PC-3 (cell line): ENCODE measurements at regions of chr7 and their contacts with region 1.

Region 1: DNA sequence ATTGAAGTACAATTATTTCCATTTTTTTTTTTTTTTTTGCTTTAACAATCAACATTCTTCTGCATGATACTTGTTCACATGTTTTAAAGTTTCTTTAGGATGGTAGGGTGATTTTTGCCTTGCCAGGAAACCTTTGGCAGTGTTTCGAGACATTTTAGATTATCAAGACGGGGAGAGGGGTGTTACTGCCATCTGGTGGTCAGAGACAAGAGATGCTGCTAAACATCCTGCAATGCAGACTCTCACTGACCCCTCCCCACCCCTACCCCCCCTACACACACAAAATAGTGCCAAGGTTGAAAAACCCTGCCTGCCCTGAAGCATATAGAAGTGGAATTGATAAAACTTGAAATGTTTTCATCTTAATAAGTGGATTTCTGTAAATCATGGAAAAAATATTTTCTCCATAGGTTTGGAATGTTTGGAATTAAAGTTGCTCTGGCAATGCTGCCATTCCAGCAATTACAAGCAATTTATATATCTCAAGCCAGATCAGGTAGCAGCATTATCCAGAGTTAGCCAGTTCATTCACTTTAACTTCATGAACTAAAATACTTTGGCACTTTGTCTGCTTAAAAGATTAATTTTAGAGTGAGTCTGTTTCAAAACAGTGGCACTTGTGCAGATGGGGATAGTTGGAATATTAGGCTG is 62.1 kb downstream of the SDHAF3 start:
- DNase-seq: peak; percentile 60
- ATAC-seq: peak; percentile 71
- H3K4me3 ChIP-seq: no peak overlapping the region
- H3K27ac ChIP-seq: no peak overlapping the region
- H3K4me1 ChIP-seq: no peaks in the 10 kb centered on the region
- H3K27me3 ChIP-seq: no peaks in the 10 kb centered on the region
- CTCF ChIP-seq: peak; percentile 65; the same call in 1 of the 2 replicates

Region 2: DNA sequence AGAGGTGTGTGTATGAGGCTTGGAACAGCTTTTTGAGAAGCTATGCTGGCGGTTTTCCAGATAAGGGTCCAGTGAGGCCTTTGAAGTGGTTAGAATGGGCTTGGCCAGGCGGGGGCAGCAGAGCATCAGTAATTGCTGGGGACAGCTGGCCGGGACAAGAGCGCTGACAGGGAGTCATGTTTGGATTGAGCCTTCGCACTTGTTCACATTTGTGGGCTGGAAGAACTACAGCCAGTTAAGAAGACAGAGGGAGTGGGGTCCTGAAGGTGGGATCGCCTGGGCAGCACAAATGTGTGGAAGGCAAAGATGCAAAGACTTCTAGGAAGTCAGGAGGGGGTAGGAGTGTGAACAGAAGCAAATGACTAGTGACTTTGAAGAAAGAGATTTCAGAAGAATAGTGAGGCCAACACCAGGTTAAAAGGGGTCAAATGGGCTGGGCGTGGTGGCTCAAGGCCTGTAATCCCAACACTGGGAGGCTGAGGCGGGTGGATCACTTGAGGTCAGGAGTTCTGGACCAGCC is 74.8 kb before region 1 on chr7:
- CTCF ChIA-PET with region 1: no interaction called
- POLR2A ChIA-PET with region 1: no interaction called
- intact Hi-C with region 1: loop called (anchors 1 kb)
- DNase-seq: peak; percentile 75
- ATAC-seq: peak; percentile 95
- H3K4me3 ChIP-seq: no peak overlapping the region
- H3K27ac ChIP-seq: no peak overlapping the region
- H3K4me1 ChIP-seq: no peaks in the 10 kb centered on the region
- H3K27me3 ChIP-seq: no peaks in the 10 kb centered on the region
- CTCF ChIP-seq: peak; percentile 89

Region 3: DNA sequence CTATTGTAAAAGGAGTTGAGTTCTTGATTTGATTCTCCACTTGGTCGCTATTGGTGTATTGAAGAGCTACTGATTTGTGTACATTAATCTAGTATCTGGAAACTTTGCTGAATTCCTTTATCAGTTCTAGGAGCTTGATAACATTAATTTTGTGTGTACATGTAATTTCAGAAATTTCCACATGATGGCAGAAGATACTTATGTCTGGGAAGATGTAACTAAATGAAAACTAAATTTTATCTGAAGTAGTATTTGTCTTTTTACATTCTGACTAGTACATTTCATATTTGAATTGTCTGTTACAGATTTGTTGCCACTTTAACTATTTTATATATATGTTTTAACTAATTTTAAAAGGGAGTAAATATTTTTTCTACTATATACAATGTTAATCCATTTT is 34.5 kb before region 1 on chr7:
- CTCF ChIA-PET with region 1: interaction called, 3 read pairs
- POLR2A ChIA-PET with region 1: no interaction called
- intact Hi-C with region 1: loop called (anchors 1 kb)
- DNase-seq: peak; percentile 61
- ATAC-seq: no peak
- H3K4me3 ChIP-seq: no peak overlapping the region
- H3K27ac ChIP-seq: no peak overlapping the region
- H3K4me1 ChIP-seq: no peaks in the 10 kb centered on the region
- H3K27me3 ChIP-seq: no peaks in the 10 kb centered on the region
- CTCF ChIP-seq: peak; percentile 58

Region 4: DNA sequence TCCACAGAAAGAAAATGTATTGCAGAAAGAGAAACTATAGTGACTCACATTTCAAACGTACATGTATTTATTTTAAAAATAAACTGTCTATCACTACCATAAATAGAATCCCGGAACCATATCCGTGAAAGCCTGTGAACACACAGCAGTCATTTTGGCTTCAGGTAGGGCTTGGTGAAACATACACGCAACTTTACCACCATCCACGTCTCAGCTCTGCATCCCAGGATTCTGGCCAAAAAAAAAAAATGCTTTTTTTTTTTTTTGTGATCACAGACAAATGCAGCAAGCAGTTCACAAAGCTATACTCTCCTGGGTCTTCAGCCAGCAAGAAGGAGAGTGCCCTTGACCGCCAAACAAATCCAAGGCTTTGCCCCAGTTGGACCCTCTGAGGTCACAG is 867.2 kb after region 1 on chr7:
- CTCF ChIA-PET with region 1: no interaction called
- POLR2A ChIA-PET with region 1: interaction called, 14 read pairs
- intact Hi-C with region 1: no loop called
- DNase-seq: no peak
- ATAC-seq: no peak
- H3K4me3 ChIP-seq: no peak overlapping the region
- H3K27ac ChIP-seq: no peak overlapping the region
- H3K4me1 ChIP-seq: peaks cover 11% of the 10 kb centered on the region
- H3K27me3 ChIP-seq: no peaks in the 10 kb centered on the region
- CTCF ChIP-seq: no peak